ENCODE measurements at regions of chr1 and their contacts with region 1.

Region 1: DNA sequence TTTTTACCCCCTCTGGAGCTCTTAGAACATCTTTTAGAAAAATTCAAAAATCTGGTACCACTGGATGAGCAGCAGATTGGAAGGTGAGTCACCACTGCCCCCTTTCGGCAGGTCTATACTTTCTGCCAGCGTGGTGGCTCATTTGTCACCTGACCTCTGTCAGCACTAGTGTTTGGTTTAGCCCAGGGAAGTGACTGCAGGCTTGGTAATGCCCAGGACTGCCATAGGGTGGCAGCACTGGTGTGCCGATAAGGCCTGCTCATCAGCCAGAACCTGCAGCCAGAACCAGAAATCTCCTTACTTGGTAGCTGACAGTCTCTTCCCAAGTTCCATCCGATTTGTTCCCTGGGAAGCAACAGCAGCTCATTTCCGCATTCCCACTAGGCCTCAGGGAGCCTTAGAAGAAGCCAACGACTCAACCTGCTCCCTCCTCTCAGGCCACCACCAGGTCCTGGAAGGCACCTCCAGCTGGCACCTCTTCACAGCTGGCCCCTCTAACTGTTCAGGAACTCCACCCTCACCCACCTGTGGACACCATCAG is 6.8 kb downstream of the SMIM12 start:
- DNase-seq: peak; percentile 96
- H3K4me3 Mint-ChIP-seq: no peak overlapping the region
- H3K27ac Mint-ChIP-seq: peak overlapping the region; percentile 2
- H3K4me1 Mint-ChIP-seq: peaks cover 29% of the 10 kb centered on the region
- H3K27me3 Mint-ChIP-seq: no peaks in the 10 kb centered on the region

Region 2: GRCh38 chr1:34578306-34578705 is 274.4 kb before region 1 on chr1:
- CTCF ChIA-PET with region 1: no interaction called
- intact Hi-C with region 1: no loop called
- DNase-seq: no peak
- H3K4me3 Mint-ChIP-seq: no peak overlapping the region
- H3K27ac Mint-ChIP-seq: no peak overlapping the region
- H3K4me1 Mint-ChIP-seq: no peaks in the 10 kb centered on the region
- H3K27me3 Mint-ChIP-seq: peaks cover 30% of the 10 kb centered on the region

Region 3: GRCh38 chr1:34792868-34793727 is 59.6 kb before region 1 on chr1 and contains the start of gene GJA4:
- CTCF ChIA-PET with region 1: interaction called, 19 read pairs
- intact Hi-C with region 1: no loop called
- DNase-seq: no peak
- H3K4me3 Mint-ChIP-seq: no peak within 1 kb of the TSS
- H3K27ac Mint-ChIP-seq: peak within 1 kb of the TSS; percentile 37
- H3K4me1 Mint-ChIP-seq: peaks cover 26% of the 10 kb centered on the region
- H3K27me3 Mint-ChIP-seq: peaks cover 13% of the 10 kb centered on the region
- total RNA-seq, gene GJA4: 0.24 to 0.69 TPM

Region 4: DNA sequence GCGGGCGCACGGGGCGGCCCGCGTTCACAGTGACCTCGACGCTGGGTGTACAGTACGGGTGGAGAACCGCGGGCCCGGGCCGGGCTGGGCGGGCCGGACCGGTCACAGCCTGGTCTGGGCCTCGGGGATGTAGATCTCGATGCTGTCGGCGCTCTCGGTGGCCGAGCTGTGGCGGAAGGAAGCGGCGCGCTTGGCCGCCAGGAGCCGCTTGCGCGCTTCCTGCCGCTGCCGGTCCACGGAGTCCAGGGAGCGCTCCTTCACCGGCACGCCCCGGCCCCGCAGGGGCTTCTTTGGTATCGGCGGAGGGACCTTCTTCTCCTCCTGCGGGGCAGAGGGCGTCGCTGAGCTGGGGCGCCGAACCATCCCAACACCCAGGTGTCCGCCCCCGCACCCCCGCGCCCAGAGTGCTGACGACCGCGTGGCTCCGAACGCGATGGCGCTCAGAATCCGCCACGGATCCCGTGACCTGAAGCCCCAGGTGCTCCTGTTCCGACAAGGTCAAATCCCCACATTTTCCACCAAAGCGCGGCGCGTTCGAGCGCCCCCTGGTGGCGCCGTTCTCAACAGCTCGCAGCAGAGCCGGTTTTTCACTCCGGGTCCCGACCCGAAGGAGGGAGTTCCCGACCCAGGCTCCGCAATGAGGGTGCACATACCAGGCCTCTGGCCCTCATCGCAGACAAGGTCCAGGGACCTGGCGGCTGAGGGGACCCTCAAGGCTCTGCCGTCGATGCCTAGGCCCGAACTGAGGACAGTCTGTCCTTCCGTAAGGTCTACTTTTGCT is 13.4 kb after region 1 on chr1:
- CTCF ChIA-PET with region 1: interaction called, 19 read pairs
- intact Hi-C with region 1: loop called (anchors 1 kb)
- DNase-seq: peak; percentile 95
- H3K4me3 Mint-ChIP-seq: peak overlapping the region; percentile 79
- H3K27ac Mint-ChIP-seq: peak overlapping the region; percentile 86
- H3K4me1 Mint-ChIP-seq: peaks cover 24% of the 10 kb centered on the region
- H3K27me3 Mint-ChIP-seq: peaks cover 2% of the 10 kb centered on the region

Region 5: DNA sequence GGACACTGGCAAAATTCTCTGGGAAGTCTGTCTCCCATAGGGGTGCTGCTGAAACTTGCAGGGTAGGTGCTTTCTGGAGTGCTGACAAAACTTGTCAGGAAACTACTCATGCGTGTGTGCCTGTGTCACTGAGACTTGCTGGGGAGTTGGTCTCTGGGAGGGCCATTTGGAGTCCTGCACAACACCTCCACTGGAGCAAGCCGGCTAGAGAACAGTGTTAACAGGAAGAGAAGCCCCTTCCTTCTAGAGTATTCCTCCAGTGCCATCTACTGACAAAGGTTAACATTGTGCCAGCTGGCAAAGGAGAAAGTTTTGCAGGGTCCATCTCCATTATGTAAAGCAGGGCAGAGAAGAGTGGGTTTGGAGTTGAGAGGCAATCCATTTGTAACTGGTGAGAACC is 445.7 kb after region 1 on chr1:
- CTCF ChIA-PET with region 1: no interaction called
- intact Hi-C with region 1: loop called (anchors 1 kb)
- DNase-seq: peak; percentile 40
- H3K4me3 Mint-ChIP-seq: no peak overlapping the region
- H3K27ac Mint-ChIP-seq: peak overlapping the region; percentile 28
- H3K4me1 Mint-ChIP-seq: peaks cover 13% of the 10 kb centered on the region
- H3K27me3 Mint-ChIP-seq: no peaks in the 10 kb centered on the region

Region 6: DNA sequence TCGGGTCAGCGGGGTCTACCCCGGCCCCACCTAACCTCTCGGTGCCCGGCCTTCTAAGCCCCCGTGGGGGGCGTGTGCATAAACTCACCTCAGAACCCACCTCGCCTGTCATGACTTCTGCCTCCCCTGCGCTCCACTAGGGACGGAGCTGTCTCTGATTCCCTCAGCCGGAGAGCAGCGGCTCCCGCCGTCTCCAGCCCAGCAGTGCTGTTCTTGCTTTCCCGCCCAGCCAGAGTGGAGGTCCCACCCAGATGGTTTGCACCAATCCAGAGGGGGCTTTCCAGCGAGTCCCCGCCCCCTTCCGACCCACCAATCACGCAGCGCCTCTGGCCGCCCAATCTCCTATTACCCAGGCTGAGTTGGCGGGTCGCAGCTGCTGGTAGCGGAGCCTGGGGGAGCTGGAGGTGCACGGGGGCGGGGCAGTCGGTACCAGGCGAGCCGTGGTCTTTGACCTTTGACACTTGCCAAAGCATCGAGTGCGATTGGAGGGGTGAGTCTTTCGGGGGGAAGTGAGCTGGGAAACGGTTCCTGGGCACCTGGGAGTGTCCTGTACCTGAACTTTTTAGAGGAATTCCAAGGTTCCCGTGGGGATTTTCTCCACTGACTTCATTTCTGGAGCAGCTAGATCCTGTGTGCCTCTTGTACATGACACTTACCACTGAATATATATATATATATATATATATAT is 917.2 kb after region 1 on chr1 and contains the start of gene CLSPN:
- CTCF ChIA-PET with region 1: no interaction called
- intact Hi-C with region 1: loop called (anchors 10 kb)
- DNase-seq: peak; percentile 98
- H3K4me3 Mint-ChIP-seq: peak within 1 kb of the TSS; percentile 98
- H3K27ac Mint-ChIP-seq: peak within 1 kb of the TSS; percentile 97
- H3K4me1 Mint-ChIP-seq: peaks cover 8% of the 10 kb centered on the region
- H3K27me3 Mint-ChIP-seq: no peaks in the 10 kb centered on the region
- total RNA-seq, gene CLSPN: 48.9 to 51.8 TPM